ENCODE measurements at regions of chr10 and their contacts with region 1.

Region 1: DNA sequence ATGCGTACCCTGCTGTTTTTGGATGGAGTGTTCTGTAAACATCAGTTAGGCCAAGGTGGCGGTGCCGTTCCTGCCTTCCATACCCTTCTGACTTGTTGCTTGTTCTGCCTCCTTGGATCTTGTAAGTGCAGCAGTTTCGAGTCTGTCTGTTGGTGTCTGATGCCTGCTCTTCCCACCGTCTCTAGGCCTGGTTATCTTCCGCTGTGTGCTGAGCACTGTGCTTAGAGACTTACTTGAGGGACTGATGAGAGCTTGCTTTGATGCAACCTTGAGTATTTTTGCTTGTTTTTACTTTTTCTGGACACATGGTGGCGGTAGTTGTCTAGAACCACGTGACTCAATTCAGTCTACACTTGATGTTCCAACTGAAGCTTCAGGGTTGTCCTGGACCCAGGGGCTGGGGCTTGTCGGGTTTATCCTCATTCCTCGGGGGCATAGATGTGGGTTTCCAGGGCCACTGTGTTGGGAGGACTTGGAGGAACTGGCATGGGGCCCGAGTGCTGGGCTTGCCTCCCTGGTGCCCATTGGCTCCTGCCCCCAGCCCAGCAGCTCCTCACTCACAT is 14.4 kb upstream of the SPRN start:
- DNase-seq: peak; percentile 63
- ATAC-seq: no peak
- H3K4me3 ChIP-seq: no peak overlapping the region
- H3K27ac ChIP-seq: no peak overlapping the region
- H3K4me1 ChIP-seq: no peaks in the 10 kb centered on the region
- H3K27me3 ChIP-seq: no peaks in the 10 kb centered on the region
- CTCF ChIP-seq: peak; percentile 61

Region 2: DNA sequence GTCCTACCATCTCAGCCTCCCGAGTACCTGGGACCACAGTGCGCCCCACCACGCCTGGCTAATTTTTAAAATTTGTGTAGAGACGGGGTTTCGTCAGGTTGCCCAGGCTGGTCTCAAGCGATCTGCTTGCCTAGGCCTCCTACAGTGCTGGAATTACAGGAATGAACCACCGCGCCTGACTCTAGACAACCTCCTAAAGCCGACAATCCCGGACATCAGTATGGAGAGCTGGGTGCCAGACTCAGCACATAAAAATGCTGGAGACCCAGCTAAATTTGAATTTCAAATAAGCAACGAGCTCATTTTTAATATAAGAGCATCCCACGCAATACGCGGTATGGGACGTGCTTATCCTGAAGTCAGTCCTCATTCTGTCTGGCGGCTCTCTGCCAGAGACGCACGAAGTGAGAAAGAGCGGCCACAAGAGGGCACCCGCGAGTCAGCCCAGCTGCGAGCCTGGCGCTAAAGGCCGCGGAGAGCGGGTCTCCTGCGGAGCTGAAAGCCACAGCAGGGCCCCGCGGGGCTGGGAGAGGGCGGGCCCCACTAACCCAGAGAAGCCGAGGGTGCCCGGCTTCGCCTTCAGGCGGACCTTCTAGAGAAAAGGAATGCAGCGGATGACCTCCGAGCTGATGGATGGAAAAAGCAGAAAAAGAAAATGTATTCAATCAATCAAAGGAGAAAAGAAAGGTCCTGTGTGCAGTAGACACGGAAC is 109.1 kb before region 1 on chr10:
- CTCF ChIA-PET with region 1: no interaction called
- POLR2A ChIA-PET with region 1: no interaction called
- intact Hi-C with region 1: no loop called
- DNase-seq: peak; percentile 87
- ATAC-seq: peak; percentile 83
- H3K4me3 ChIP-seq: peak overlapping the region; percentile 60
- H3K27ac ChIP-seq: no peak overlapping the region
- H3K4me1 ChIP-seq: peaks cover 15% of the 10 kb centered on the region
- H3K27me3 ChIP-seq: peaks cover 14% of the 10 kb centered on the region
- CTCF ChIP-seq: peak; percentile 84

Region 3: GRCh38 chr10:133520155-133520738 is 81.5 kb after region 1 on chr10:
- CTCF ChIA-PET with region 1: no interaction called
- POLR2A ChIA-PET with region 1: no interaction called
- intact Hi-C with region 1: loop called (anchors 5 kb)
- DNase-seq: peak; percentile 79
- ATAC-seq: peak; percentile 94
- H3K4me3 ChIP-seq: peak overlapping the region; percentile 64
- H3K27ac ChIP-seq: 0 out of 2 replicates have a peak overlapping the region, but pooled peaks have one; percentile 9
- H3K4me1 ChIP-seq: peaks cover 15% of the 10 kb centered on the region
- H3K27me3 ChIP-seq: no peaks in the 10 kb centered on the region
- CTCF ChIP-seq: peak; percentile 83